ENCODE measurements at regions of chr1 and their contacts with region 1.

Region 1: GRCh38 chr1:56803561-56804156 is 15.5 kb downstream of the FYB2 start:
- DNase-seq: peak in 1 of 5 donors; percentile 15
- ATAC-seq: no peak
- H3K4me3 ChIP-seq: no peak overlapping the region
- H3K27ac ChIP-seq: peak overlapping the region in 2 of 12 donors; percentile 28 to 47
- H3K4me1 ChIP-seq: peaks cover 0 to 32% (median 7%) of the 10 kb centered on the region in 12 donors
- H3K27me3 ChIP-seq: no peaks in the 10 kb centered on the region
- CTCF ChIP-seq: peak in 9 of 12 donors; percentile 15 to 43 (median 31)
- POLR2A ChIP-seq: no peak

Region 2: DNA sequence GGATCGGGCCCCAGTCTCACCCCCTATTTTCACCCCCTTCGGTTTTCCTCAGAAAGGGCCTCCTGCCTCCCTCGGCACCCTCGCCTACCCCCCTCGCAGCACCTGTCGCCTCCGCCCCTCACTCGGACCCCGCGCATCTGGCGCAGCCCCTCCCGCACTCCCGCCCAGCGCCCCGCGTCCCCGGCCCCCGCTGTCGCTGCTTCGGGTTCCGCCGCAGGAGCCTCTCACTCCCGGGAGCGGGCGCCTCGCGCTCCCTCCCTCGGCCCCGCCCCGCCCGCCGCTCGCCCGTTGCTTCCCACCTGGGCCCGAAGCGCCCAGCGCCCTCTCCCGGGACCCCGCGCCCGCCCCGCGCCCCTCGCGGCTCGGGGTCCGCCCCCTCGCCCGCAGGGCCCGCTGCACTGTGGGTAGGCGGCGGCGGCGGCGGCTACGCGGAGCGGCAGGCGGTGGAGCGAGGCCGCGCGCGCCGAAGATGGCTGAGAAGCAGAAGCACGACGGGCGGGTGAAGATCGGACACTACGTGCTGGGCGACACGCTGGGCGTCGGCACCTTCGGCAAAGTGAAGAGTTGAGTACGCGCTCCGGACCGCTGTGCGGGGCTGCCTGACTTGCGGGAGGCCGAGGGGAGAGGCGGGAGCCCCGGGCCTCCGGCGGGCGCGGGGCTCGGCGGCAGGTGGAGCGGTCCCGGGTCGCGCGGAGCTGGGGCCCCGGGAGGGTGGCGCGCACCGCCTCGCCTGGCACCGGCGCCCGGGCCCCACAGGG is 158.6 kb before region 1 on chr1 and contains the start of gene PRKAA2:
- intact Hi-C with region 1: loop called in 2 of 10 experiments (anchors 5 to 10 kb)
- DNase-seq: peak; percentile 44 to 72 (median 61)
- ATAC-seq: peak; percentile 39 to 93 (median 84)
- H3K4me3 ChIP-seq: peak within 1 kb of the TSS; percentile 42 to 89 (median 64)
- H3K27ac ChIP-seq: peak within 1 kb of the TSS; percentile 73 to 95 (median 88)
- H3K4me1 ChIP-seq: peaks cover 0 to 11% (median 5%) of the 10 kb centered on the region in 12 donors
- H3K27me3 ChIP-seq: peaks cover 0 to 41% (median 0%) of the 10 kb centered on the region in 9 donors
- CTCF ChIP-seq: peak in 1 of 12 donors; percentile 8
- POLR2A ChIP-seq: peak in 1 of 2 donors; percentile 28
- total RNA-seq, gene PRKAA2: 51.3 to 163 (median 114) TPM

Region 3: GRCh38 chr1:56654126-56654923 is 149.3 kb before region 1 on chr1:
- intact Hi-C with region 1: loop called in 1 of 10 experiments (anchors 10 kb)
- DNase-seq: no peak
- ATAC-seq: peak; percentile 63 to 88 (median 82)
- H3K4me3 ChIP-seq: peak overlapping the region in 5 of 12 donors; percentile 1 to 34 (median 4)
- H3K27ac ChIP-seq: peak overlapping the region; percentile 67 to 94 (median 81)
- H3K4me1 ChIP-seq: peaks cover 0 to 7% (median 0%) of the 10 kb centered on the region in 12 donors
- H3K27me3 ChIP-seq: no peaks in the 10 kb centered on the region
- CTCF ChIP-seq: no peak
- POLR2A ChIP-seq: no peak